PC-9 (cell line): ENCODE measurements at regions of chr7 and their contacts with region 1.

Region 1: DNA sequence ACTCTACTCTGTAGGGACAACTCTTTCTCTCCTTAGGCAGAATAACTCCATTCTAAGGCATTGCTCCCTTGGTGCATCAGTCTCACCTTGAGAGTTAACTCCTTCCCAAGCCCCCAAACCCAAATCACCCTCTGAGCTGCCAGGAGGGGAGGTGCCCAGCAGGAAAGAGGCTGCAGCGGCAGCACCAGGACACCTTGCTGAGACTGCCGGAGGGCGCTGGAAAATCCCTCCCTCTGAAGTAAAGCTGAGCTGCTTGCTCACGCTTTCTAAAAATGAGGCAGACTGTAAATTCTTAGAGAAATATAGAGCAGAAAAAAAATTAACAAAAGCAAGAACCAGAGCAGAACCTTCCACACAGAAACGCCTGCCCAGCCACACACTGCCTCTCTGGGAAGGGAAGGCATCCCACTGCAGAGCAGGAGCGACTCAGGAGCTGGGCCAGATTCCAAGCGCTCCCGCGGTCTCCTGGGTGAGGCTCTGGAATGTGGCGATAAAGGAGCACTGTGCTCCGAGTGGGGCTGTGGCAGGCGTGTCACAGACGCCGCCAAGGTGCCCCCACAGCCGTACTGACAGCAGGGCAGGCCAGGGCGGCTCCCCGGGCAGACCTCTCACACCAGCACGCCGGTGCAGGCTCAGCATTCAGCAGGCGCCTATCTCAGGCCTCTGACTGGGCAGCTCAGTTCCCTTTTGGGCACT is 202.1 kb downstream of the TNS3 start:
- DNase-seq: peak in 1 of 2 experiments; percentile 86
- H3K4me3 ChIP-seq: no peak overlapping the region
- H3K27ac ChIP-seq: no peak overlapping the region
- H3K4me1 ChIP-seq: peaks cover 14% of the 10 kb centered on the region
- H3K27me3 ChIP-seq: no peaks in the 10 kb centered on the region
- CTCF ChIP-seq: no peak

Region 2: DNA sequence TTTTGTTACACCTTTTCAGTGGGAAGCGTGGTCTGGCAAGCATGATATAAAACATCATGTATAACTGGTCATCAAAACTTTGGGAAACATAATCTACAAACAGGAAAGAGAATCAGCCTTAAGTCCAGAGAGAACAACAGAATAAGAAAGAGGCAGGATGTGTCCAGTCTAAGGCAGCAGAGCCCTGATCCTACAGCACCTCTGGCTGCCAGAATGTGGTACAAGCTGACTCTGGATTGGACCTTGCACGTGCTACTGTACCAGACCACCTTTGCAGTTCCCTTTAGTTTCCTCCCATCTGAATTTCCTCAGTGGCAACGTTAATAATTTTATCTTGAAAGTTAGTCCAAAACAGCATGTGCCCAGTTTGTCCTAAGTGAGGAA is 634.1 kb before region 1 on chr7:
- CTCF ChIA-PET with region 1: no interaction called
- POLR2A ChIA-PET with region 1: no interaction called
- intact Hi-C with region 1: no loop called
- DNase-seq: no peak
- H3K4me3 ChIP-seq: no peak overlapping the region
- H3K27ac ChIP-seq: no peak overlapping the region
- H3K4me1 ChIP-seq: 0 out of 2 replicates have a peak, but pooled peaks cover 3% of the 10 kb centered on the region
- H3K27me3 ChIP-seq: no peaks in the 10 kb centered on the region
- CTCF ChIP-seq: no peak

Region 3: DNA sequence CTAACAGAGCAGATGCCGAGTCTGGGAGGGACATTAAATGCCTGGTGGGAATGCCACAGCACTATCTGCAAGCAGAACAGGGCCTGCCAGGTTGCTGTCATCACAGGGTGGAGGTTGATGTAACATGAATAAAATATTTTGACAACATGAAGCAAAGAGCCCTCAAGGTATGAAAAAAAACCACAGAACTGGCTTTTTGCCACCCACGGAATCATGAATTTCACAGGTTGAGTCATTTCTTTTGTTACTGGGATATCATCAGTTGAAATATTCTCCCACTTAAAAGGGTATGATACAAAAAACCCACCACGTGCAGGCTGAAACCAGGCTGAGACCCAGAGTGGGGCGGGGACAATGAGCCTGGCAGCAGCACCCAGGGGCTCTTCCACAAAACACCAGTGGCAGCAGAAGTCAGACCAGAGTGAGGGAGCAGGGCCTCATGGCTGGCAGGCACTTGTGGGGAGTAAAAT is 18.0 kb before region 1 on chr7:
- CTCF ChIA-PET with region 1: no interaction called
- POLR2A ChIA-PET with region 1: no interaction called
- intact Hi-C with region 1: loop called (anchors 1 kb)
- DNase-seq: peak; percentile 88 to 95
- H3K4me3 ChIP-seq: no peak overlapping the region
- H3K27ac ChIP-seq: peak overlapping the region; percentile 69
- H3K4me1 ChIP-seq: peaks cover 20% of the 10 kb centered on the region
- H3K27me3 ChIP-seq: no peaks in the 10 kb centered on the region
- CTCF ChIP-seq: no peak

Region 4: DNA sequence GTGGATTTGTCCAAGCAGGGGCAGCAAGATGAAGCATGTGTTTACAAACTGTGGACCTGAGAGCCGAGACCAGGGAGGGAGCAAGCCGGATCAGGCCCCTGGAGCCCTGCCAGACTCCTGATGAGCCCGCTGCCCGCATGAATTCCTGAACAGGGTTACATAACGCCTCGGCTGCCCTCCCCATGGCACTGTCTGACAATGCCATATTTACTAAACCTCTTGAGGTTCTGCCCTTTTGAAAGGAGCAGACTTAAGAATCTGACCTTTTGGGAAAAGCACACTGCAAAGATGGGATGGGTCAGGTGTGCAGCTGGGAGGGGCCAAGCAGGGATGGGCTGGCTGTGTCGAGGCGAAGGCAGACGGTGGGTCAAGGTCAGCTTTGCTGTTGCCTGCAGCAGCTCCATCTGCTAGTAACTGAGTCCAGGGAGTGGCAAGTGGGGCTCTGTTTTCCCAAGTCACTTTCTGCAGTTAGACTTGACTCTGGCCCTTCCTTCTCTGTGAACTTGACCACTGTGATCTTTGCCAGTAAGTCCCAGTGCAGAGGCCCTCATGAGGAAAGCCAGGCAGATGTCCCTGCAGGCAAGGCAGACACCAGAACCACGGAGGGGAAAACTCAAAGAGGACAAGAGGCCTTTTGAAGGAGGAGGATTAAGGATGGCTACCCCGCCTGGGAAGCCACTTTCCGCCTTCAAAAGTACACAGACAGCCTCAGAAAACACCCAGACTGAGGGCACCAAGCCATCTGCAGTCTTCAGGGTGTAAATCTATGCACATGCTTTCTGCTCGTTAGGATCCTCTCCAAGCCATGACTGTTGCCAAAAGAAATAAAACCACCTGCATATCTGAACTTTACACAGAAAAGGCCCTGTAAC is 26.4 kb after region 1 on chr7:
- CTCF ChIA-PET with region 1: no interaction called
- POLR2A ChIA-PET with region 1: no interaction called
- intact Hi-C with region 1: loop called (anchors 1 kb)
- DNase-seq: peak in 1 of 2 experiments; percentile 87
- H3K4me3 ChIP-seq: no peak overlapping the region
- H3K27ac ChIP-seq: no peak overlapping the region
- H3K4me1 ChIP-seq: no peaks in the 10 kb centered on the region
- H3K27me3 ChIP-seq: no peaks in the 10 kb centered on the region
- CTCF ChIP-seq: no peak